SK-N-SH (cell line): ENCODE measurements at regions of chr1 and their contacts with region 1.

Region 1: DNA sequence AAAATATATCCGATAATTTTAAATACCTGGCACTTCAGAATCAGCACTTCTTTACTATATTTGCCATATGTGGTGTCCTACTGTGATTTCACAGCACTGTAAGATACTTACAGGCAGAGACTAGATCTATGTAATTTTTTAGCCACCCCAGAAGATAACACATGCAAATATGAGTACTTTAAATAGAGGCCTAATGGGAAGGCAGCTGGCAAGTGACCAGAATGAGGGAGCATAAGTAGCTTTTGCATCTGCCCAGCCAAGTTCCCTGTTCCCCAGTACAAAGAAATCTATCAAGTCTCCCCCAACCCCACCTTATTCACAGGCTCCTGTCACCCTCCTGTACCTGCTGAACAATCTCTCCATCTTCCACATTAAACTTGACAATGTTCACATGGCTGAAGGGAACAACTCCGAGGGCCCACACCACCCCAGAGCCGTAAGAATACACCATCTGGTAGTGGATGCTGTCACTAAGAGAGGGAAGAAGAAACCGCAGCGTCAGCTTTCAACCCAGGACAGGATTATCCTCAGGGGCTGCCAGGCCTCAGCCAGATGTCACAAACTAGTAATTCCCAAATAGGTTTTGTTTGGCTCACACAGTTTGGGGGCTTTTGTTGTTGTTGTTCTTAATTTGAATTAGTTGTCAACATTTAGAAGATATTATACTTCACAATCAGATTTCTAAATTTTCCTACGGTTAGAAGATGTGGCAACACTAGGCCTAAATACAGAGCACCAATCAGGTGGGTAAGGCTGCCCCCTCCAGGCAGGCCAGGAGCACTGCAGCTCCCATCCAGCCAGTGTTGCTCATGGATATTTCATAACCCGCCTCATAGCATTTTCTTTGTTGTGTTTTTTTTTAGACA is 10.4 kb downstream of the EMC1 start:
- DNase-seq: peak; percentile 82
- H3K4me3 ChIP-seq: no peak overlapping the region; a peak in 1 of 4 replicates
- H3K27ac ChIP-seq: no peak overlapping the region
- H3K4me1 ChIP-seq: no peaks in the 10 kb centered on the region
- H3K27me3 ChIP-seq: no peaks in the 10 kb centered on the region
- CTCF ChIP-seq: peak; percentile 98
- EP300 ChIP-seq: no peak
- RAD21 ChIP-seq: peak; percentile 79

Region 2: DNA sequence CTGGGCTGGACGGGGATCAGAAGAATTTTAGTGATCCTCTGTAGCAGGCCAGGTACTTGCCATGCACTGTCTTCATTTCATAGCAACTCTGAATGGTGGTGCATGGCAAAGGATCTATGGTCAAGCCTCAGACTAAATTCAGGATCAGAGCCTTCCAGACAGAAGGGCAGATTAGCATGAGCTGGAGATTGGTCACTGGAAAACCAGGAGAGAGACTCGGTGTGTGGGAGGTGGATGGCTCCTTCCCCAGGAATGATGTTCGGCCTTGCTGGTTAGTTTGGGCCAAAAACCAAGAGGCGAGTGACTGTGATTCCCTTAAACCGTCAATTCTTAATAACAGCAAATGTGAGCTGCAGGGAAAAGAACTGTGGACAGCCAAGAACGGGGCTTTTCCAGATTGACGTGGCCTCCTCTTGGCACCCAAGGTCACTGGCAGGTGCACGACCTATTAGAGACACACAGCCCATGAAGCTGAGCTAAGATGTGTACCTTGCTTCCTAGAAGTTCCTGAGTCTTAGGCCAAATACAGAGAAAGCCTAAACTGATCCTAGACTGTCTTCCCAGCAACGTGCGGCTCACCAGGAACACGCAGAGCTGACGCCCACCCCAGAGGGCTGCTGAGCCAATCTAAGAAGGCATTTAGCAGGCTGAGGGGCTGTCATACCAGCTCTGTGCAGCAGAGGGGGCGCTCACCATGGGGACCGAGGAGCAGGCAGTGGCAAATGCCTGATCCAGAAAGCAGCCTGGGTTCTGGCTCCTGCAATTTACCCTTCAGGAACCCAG is 357.1 kb before region 1 on chr1:
- CTCF ChIA-PET with region 1: interaction called, 10 read pairs
- POLR2A ChIA-PET with region 1: no interaction called
- DNase-seq: peak; percentile 86
- H3K4me3 ChIP-seq: no peak overlapping the region; a peak in 1 of 4 replicates
- H3K27ac ChIP-seq: no peak overlapping the region
- H3K4me1 ChIP-seq: peaks cover 4 to 8% of the 10 kb centered on the region in 2 experiments; a peak in 2 of 4 replicates
- H3K27me3 ChIP-seq: no peaks in the 10 kb centered on the region
- CTCF ChIP-seq: peak; percentile 84
- EP300 ChIP-seq: no peak
- RAD21 ChIP-seq: peak; percentile 82

Region 3: DNA sequence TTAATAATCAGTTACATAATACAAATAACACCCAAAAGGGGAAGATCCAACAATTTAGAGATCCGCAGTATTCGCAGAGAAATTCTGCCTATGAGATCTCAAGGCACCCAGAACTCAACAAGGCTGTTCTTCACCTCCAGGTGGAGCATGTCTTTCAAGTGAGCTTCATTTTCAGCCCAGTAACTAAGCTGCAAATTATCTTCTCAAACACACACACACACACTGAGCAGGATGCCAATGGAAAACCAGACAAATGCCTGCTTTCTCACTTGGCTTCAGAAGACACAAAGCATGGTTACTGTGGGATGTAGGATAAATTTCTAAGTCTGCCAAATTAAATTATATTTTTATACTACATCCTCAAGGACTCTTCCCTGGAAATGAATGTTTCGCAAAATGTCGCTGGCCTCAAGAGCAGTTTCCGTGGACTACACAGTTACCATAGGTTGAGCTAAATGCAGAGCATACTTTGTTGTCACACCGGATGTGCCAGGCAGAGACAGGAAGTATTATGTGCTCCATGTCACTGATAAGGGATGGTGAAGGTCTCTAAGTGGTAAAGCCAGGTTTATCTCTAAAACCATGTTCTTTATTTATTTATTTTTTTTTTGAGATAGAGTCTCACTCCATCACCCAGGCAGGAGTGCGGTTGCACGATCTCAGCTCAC is 61.2 kb before region 1 on chr1:
- CTCF ChIA-PET with region 1: interaction called, 15 read pairs
- POLR2A ChIA-PET with region 1: interaction called, 6 read pairs
- DNase-seq: peak; percentile 30
- H3K4me3 ChIP-seq: no peak overlapping the region
- H3K27ac ChIP-seq: peak overlapping the region in 1 of 2 experiments; percentile 28; a peak in 2 of 4 replicates
- H3K4me1 ChIP-seq: no peaks in the 10 kb centered on the region
- H3K27me3 ChIP-seq: no peaks in the 10 kb centered on the region
- CTCF ChIP-seq: peak; percentile 52
- EP300 ChIP-seq: no peak
- RAD21 ChIP-seq: peak; percentile 33

Region 4: GRCh38 chr1:19222979-19223824 is 17.7 kb before region 1 on chr1:
- CTCF ChIA-PET with region 1: interaction called, 14 read pairs
- POLR2A ChIA-PET with region 1: interaction called, 3 read pairs
- DNase-seq: no peak
- H3K4me3 ChIP-seq: no peak overlapping the region
- H3K27ac ChIP-seq: no peak overlapping the region
- H3K4me1 ChIP-seq: no peaks in the 10 kb centered on the region
- H3K27me3 ChIP-seq: no peaks in the 10 kb centered on the region
- CTCF ChIP-seq: no peak
- EP300 ChIP-seq: no peak
- RAD21 ChIP-seq: no peak

Region 5: GRCh38 chr1:19251305-19252196 is 10.6 kb after region 1 on chr1 and contains the starts of genes EMC1 and MRTO4:
- CTCF ChIA-PET with region 1: interaction called, 14 read pairs
- POLR2A ChIA-PET with region 1: no interaction called
- DNase-seq: peak; percentile 95
- H3K4me3 ChIP-seq: peak within 1 kb of the TSS; percentile 71 to 98
- H3K27ac ChIP-seq: peak within 1 kb of the TSS; percentile 95
- H3K4me1 ChIP-seq: peaks cover 14 to 17% of the 10 kb centered on the region in 2 experiments; a peak in 3 of 4 replicates
- H3K27me3 ChIP-seq: no peaks in the 10 kb centered on the region
- CTCF ChIP-seq: no peak
- EP300 ChIP-seq: no peak
- RAD21 ChIP-seq: no peak
- polyA plus RNA-seq, gene EMC1: 55.9 and 87.6 TPM in 2 replicates
- polyA plus RNA-seq, gene MRTO4: 48.4 and 55.2 TPM in 2 replicates

Region 6: GRCh38 chr1:19257178-19257914 is 16.4 kb after region 1 on chr1:
- CTCF ChIA-PET with region 1: interaction called, 14 read pairs
- POLR2A ChIA-PET with region 1: no interaction called
- DNase-seq: no peak
- H3K4me3 ChIP-seq: no peak overlapping the region
- H3K27ac ChIP-seq: no peak overlapping the region
- H3K4me1 ChIP-seq: peaks cover 7 to 10% of the 10 kb centered on the region in 2 experiments; a peak in 2 of 4 replicates
- H3K27me3 ChIP-seq: no peaks in the 10 kb centered on the region
- CTCF ChIP-seq: no peak
- EP300 ChIP-seq: no peak
- RAD21 ChIP-seq: no peak